ENCODE measurements at regions of chr9 and their contacts with region 1.

Region 1: GRCh38 chr9:107295995-107296394 is 12.9 kb downstream of the RAD23B start:
- DNase-seq: no peak
- ATAC-seq: no peak
- H3K4me3 ChIP-seq: peak overlapping the region in 1 of 4 donors; percentile 17
- H3K27ac ChIP-seq: peak overlapping the region; percentile 74 to 90 (median 76)
- H3K4me1 ChIP-seq: peaks cover 74 to 81% of the 10 kb centered on the region in 2 donors
- H3K27me3 ChIP-seq: no peaks in the 10 kb centered on the region
- CTCF ChIP-seq: no peak
- POLR2A ChIP-seq: no peak

Region 2: GRCh38 chr9:107316795-107317661 is 21.0 kb after region 1 on chr9:
- in situ Hi-C with region 1: no loop called
- intact Hi-C with region 1: loop called (anchors 2 kb)
- DNase-seq: no peak
- ATAC-seq: no peak
- H3K4me3 ChIP-seq: no peak overlapping the region
- H3K27ac ChIP-seq: peak overlapping the region in 1 of 4 donors; percentile 16
- H3K4me1 ChIP-seq: peaks cover 25 to 36% of the 10 kb centered on the region in 2 donors
- H3K27me3 ChIP-seq: no peaks in the 10 kb centered on the region
- CTCF ChIP-seq: no peak
- POLR2A ChIP-seq: no peak

Region 3: GRCh38 chr9:107409581-107410387 is 113.8 kb after region 1 on chr9:
- in situ Hi-C with region 1: no loop called
- intact Hi-C with region 1: no loop called
- DNase-seq: no peak
- ATAC-seq: no peak
- H3K4me3 ChIP-seq: no peak overlapping the region
- H3K27ac ChIP-seq: no peak overlapping the region
- H3K4me1 ChIP-seq: no peaks in the 10 kb centered on the region
- H3K27me3 ChIP-seq: no peaks in the 10 kb centered on the region
- CTCF ChIP-seq: no peak
- POLR2A ChIP-seq: no peak